GM12878 (cell line): ENCODE measurements at regions of chr18 and their contacts with region 1.

Region 1: GRCh38 chr18:36688020-36688965 is 140.5 kb downstream of the TPGS2 start:
- DNase-seq: peak; percentile 9
- ATAC-seq: peak; percentile 91
- H3K4me3 ChIP-seq: no peak overlapping the region
- H3K27ac ChIP-seq: no peak overlapping the region
- H3K4me1 ChIP-seq: no peaks in the 10 kb centered on the region
- H3K27me3 ChIP-seq: no peaks in the 10 kb centered on the region
- CTCF ChIP-seq: peak; percentile 76 to 91 (median 89)
- EP300 ChIP-seq: no peak
- POLR2A ChIP-seq: no peak
- RAD21 ChIP-seq: peak; percentile 76

Region 2: DNA sequence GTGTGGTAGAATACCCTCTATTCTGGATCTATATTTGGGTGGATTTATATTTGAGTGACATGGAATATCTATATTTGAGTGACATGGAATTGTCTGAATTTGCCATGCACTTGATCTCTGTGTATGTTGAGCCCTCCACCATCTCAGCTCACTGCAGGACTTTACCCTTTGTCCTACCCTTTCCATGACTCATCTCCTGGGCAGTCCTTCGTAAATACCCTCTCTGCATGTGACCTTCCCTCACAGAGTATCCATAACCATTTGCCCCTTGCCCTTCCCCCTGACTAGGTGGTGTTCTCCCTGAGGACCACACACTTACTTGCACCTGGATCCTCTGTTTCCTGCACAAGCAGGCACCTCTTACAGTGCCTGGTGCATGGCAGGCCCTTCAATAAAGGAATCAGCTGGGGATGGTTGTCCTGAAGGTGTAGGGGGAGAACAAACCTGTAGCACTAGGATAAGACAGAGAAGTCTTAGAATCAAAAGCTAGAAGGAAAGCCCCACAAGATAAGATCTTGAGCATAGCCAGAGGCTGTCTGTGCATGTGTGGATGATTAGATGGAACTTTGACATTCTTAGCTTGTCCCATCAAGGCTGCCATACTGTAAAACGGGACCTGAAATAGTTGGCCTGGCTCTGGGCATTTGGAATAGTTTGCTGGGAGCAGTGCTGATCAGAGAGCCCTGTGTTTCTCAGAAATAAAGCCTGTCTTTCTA is 160.4 kb before region 1 on chr18:
- CTCF ChIA-PET with region 1: no interaction called
- POLR2A ChIA-PET with region 1: no interaction called
- RAD21 ChIA-PET with region 1: no interaction called
- SMC1A ChIA-PET with region 1: no interaction called
- in situ Hi-C with region 1: no loop called
- intact Hi-C with region 1: no loop called
- DNase-seq: no peak
- ATAC-seq: no peak
- H3K4me3 ChIP-seq: no peak overlapping the region
- H3K27ac ChIP-seq: no peak overlapping the region
- H3K4me1 ChIP-seq: no peaks in the 10 kb centered on the region
- H3K27me3 ChIP-seq: no peaks in the 10 kb centered on the region
- CTCF ChIP-seq: no peak
- EP300 ChIP-seq: no peak
- POLR2A ChIP-seq: no peak
- RAD21 ChIP-seq: no peak

Region 3: DNA sequence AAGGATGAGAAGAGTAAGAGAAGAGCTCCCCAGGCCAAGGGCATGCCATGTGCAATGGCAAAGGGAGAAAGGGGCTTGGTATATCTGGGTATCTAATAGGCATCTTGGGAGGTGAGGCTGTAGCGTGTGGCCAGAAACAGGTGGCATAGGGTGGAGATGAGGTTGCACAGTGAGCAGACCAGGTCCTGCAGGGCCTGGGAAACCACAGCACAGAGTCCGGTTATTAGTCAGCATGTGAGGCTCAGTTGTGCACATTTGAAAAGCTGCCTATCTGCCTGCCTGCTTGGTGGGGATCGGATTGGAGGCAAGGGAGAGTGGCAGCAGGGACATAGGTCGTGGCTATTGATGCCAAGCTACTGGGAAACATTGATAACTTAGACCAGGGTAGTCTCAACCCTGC is 50.1 kb before region 1 on chr18:
- CTCF ChIA-PET with region 1: interaction called, 11 read pairs
- POLR2A ChIA-PET with region 1: no interaction called
- RAD21 ChIA-PET with region 1: interaction called, 3 read pairs
- SMC1A ChIA-PET with region 1: interaction called, 6 read pairs
- in situ Hi-C with region 1: no loop called
- intact Hi-C with region 1: no loop called
- DNase-seq: peak; percentile 92
- ATAC-seq: peak; percentile 88
- H3K4me3 ChIP-seq: no peak overlapping the region
- H3K27ac ChIP-seq: peak overlapping the region; percentile 94
- H3K4me1 ChIP-seq: peaks cover 58% of the 10 kb centered on the region
- H3K27me3 ChIP-seq: no peaks in the 10 kb centered on the region
- CTCF ChIP-seq: no peak
- EP300 ChIP-seq: peak in 1 of 2 experiments; percentile 83; a peak in 2 of 4 replicates
- POLR2A ChIP-seq: no peak
- RAD21 ChIP-seq: no peak

Region 4: DNA sequence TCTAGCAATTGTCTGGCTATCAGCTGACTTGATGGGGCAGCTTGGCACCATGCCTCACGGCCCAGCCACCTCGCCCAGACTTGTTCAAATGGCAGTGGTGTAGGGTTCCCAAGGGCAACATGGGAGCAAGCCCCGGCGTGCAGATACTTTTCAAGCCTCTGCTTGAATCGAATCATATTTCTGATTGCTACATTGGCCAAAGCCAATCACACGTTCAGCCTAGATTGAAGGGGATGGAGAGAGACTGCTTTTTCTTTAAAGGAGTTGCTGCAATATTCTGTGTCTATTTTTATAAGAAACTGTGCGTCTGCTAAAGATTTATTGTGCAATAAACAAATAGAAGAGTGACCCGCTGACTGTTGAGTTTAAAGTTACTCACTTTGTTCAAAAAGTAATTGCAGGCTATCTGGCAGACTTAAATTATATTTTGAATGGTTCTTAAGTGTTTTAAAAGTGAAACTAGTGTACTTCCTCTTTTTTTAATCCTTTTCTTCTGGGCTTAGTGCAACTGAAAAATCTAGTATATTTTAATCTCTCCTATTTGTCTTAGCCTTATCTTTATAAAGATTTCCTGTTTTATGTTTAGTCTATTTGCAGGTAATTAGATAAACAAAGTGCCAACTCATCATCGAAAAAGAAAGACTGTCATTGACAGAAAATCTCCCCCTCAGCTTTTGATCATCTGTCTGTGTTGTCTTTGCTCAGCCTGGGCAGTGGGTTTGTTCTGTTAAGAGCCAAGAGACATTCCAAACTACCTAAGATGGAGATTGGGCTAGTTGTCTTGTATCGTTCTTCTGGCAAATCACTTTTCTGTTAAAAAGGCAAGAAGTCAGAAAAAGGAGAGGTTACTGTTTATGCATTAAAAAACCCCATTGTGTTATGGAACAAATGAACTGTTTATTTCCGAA is 15.6 kb before region 1 on chr18:
- CTCF ChIA-PET with region 1: interaction called, 45 read pairs
- POLR2A ChIA-PET with region 1: no interaction called
- RAD21 ChIA-PET with region 1: no interaction called
- SMC1A ChIA-PET with region 1: interaction called, 26 read pairs
- in situ Hi-C with region 1: no loop called
- intact Hi-C with region 1: no loop called
- DNase-seq: no peak
- ATAC-seq: peak; percentile 88
- H3K4me3 ChIP-seq: no peak overlapping the region
- H3K27ac ChIP-seq: no peak overlapping the region
- H3K4me1 ChIP-seq: 0 out of 2 replicates have a peak, but pooled peaks cover 7% of the 10 kb centered on the region
- H3K27me3 ChIP-seq: no peaks in the 10 kb centered on the region
- CTCF ChIP-seq: no peak
- EP300 ChIP-seq: no peak
- POLR2A ChIP-seq: no peak
- RAD21 ChIP-seq: no peak

Region 5: DNA sequence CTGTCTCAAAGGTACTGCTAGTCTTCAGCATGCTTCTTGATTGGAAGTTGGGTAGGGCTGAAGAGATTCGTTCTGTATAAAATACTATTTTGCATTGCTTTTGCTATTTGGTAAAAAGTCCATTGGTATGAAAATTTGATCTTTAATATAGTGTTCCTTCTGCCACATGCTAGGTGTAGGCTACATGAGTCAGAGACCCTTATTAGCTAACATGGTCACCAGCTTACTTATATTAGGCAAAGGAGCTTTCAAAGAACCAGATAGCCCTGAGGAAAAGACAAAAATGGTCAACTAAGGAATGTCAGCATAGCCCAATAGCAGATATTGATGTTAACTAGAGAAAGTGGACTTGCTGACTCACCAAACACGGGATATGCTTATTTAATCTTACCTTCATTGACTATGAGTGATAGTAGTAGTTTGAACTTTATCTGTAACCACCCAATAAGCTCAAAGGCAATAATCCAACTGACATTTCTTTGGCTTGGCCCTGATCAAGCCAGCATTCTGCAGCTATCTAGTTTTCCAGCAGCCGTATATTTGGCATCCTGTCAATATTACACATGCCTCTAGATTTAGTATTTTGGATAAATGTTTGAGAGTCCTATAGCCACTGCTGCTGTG is 30.5 kb after region 1 on chr18:
- CTCF ChIA-PET with region 1: interaction called, 11 read pairs
- POLR2A ChIA-PET with region 1: no interaction called
- RAD21 ChIA-PET with region 1: no interaction called
- SMC1A ChIA-PET with region 1: interaction called, 10 read pairs
- in situ Hi-C with region 1: no loop called
- intact Hi-C with region 1: no loop called
- DNase-seq: no peak
- ATAC-seq: no peak
- H3K4me3 ChIP-seq: no peak overlapping the region
- H3K27ac ChIP-seq: no peak overlapping the region
- H3K4me1 ChIP-seq: no peaks in the 10 kb centered on the region
- H3K27me3 ChIP-seq: no peaks in the 10 kb centered on the region
- CTCF ChIP-seq: no peak
- EP300 ChIP-seq: no peak
- POLR2A ChIP-seq: no peak
- RAD21 ChIP-seq: no peak

Region 6: DNA sequence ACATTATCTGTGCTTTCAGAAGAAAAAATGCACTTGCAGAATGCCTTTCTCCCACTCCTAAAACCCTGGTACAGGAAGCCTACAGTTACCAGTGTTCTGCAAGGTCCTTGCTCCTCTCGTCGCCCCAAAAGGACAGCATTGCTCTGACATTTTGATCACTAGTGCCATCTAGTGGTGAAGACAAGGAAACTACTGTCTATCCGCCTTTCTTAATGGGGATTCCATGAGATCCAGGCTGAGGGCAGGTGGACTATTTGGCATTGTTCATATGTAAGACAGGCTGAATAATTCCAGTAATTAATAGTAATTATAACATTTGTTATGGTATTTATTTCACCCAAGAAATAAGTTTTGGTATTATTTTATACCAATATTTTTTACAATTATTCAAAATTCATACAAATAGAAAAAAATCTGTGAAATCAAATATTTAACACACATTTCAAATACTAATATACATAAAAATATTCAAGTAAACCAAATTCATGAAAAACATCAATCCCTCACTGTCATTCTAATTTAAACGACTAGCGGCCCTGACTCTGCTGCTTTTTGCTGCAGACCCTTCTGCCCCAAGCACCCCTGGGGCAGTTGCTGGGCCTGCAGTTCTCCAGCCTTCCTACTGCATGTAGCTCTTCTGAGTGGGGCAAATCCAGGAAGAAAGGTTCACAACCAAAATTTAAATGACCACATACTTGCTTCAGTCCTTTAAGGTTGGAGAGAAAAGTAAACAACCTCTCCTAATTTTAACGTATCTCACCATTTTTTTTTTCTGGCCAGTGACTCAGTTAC is 121.5 kb after region 1 on chr18:
- CTCF ChIA-PET with region 1: interaction called, 68 read pairs
- POLR2A ChIA-PET with region 1: no interaction called
- RAD21 ChIA-PET with region 1: interaction called, 18 read pairs
- SMC1A ChIA-PET with region 1: interaction called, 14 read pairs
- in situ Hi-C with region 1: no loop called
- intact Hi-C with region 1: loop called (anchors 2 kb)
- DNase-seq: peak; percentile 27
- ATAC-seq: peak; percentile 99
- H3K4me3 ChIP-seq: no peak overlapping the region
- H3K27ac ChIP-seq: no peak overlapping the region
- H3K4me1 ChIP-seq: no peaks in the 10 kb centered on the region
- H3K27me3 ChIP-seq: no peaks in the 10 kb centered on the region
- CTCF ChIP-seq: peak; percentile 75 to 86 (median 80)
- EP300 ChIP-seq: no peak
- POLR2A ChIP-seq: no peak
- RAD21 ChIP-seq: peak; percentile 78